ENCODE measurements at regions of chr3 and their contacts with region 1.

Region 1: GRCh38 chr3:79109754-79110153 is 658.0 kb downstream of the ROBO1 start:
- DNase-seq: no peak
- H3K4me3 Mint-ChIP-seq: no peak overlapping the region
- H3K27ac Mint-ChIP-seq: no peak overlapping the region
- H3K4me1 Mint-ChIP-seq: no peaks in the 10 kb centered on the region
- H3K27me3 Mint-ChIP-seq: no peaks in the 10 kb centered on the region

Region 2: GRCh38 chr3:79067734-79068133 is 42.0 kb before region 1 on chr3:
- CTCF ChIA-PET with region 1: no interaction called
- intact Hi-C with region 1: no loop called
- DNase-seq: no peak
- H3K4me3 Mint-ChIP-seq: no peak overlapping the region
- H3K27ac Mint-ChIP-seq: no peak overlapping the region
- H3K4me1 Mint-ChIP-seq: no peaks in the 10 kb centered on the region
- H3K27me3 Mint-ChIP-seq: no peaks in the 10 kb centered on the region

Region 3: GRCh38 chr3:79167651-79168416 is 58.1 kb after region 1 on chr3:
- CTCF ChIA-PET with region 1: no interaction called
- intact Hi-C with region 1: loop called (anchors 10 kb)
- DNase-seq: no peak
- H3K4me3 Mint-ChIP-seq: no peak overlapping the region
- H3K27ac Mint-ChIP-seq: no peak overlapping the region
- H3K4me1 Mint-ChIP-seq: no peaks in the 10 kb centered on the region
- H3K27me3 Mint-ChIP-seq: no peaks in the 10 kb centered on the region